ENCODE measurements at regions of chr1 and their contacts with region 1.

Region 1: GRCh38 chr1:228515200-228515834 is 28.1 kb downstream of the RNF187 start:
- DNase-seq: peak; percentile 65
- H3K4me3 Mint-ChIP-seq: no peak overlapping the region
- H3K27ac Mint-ChIP-seq: no peak overlapping the region
- H3K4me1 Mint-ChIP-seq: peaks cover 9% of the 10 kb centered on the region
- H3K27me3 Mint-ChIP-seq: peaks cover 75% of the 10 kb centered on the region
- CTCF ChIP-seq: peak; percentile 97

Region 2: DNA sequence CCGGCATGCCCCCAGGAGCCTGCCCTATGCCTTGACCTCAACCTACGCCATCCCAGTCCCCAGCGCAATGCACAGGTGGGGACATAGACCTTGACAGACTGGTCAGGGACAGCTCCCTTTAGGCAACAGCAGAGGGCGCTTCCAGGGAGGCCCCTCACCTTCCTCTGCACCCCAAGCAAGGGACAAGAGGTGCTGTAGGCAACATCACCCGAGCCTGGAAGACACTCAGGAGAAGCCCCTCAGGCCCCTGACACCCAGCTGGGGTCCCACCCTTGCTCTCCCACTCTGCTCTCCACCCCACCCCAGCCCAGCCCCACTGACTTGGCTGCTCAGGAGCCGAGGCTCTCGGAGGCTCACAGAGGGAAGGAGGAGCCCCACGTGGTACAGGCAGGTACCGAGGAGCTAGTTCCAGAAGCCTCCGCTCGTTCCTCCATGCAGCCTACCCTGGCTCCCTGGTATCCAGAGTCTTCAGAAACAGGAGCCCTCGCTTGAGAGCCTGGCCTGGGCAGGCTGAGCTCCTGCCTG is 510.9 kb before region 1 on chr1:
- CTCF ChIA-PET with region 1: interaction called, 20 read pairs
- POLR2A ChIA-PET with region 1: no interaction called
- intact Hi-C with region 1: loop called (anchors 1 kb)
- DNase-seq: peak; percentile 82
- H3K4me3 Mint-ChIP-seq: no peak overlapping the region
- H3K27ac Mint-ChIP-seq: no peak overlapping the region
- H3K4me1 Mint-ChIP-seq: peaks cover 10% of the 10 kb centered on the region
- H3K27me3 Mint-ChIP-seq: peaks cover 37% of the 10 kb centered on the region
- CTCF ChIP-seq: peak; percentile 88

Region 3: GRCh38 chr1:228212966-228213844 is 302.1 kb before region 1 on chr1:
- CTCF ChIA-PET with region 1: interaction called, 21 read pairs
- POLR2A ChIA-PET with region 1: no interaction called
- intact Hi-C with region 1: loop called (anchors 1 kb)
- DNase-seq: peak; percentile 92
- H3K4me3 Mint-ChIP-seq: peak overlapping the region; percentile 88
- H3K27ac Mint-ChIP-seq: peak overlapping the region; percentile 74
- H3K4me1 Mint-ChIP-seq: peaks cover 8% of the 10 kb centered on the region
- H3K27me3 Mint-ChIP-seq: no peaks in the 10 kb centered on the region
- CTCF ChIP-seq: peak; percentile 69

Region 4: GRCh38 chr1:228265167-228265566 is 250.2 kb before region 1 on chr1:
- CTCF ChIA-PET with region 1: interaction called, 5 read pairs
- POLR2A ChIA-PET with region 1: no interaction called
- intact Hi-C with region 1: loop called (anchors 1 kb)
- DNase-seq: peak; percentile 48
- H3K4me3 Mint-ChIP-seq: no peak overlapping the region
- H3K27ac Mint-ChIP-seq: no peak overlapping the region
- H3K4me1 Mint-ChIP-seq: no peaks in the 10 kb centered on the region
- H3K27me3 Mint-ChIP-seq: no peaks in the 10 kb centered on the region
- CTCF ChIP-seq: peak; percentile 63

Region 5: GRCh38 chr1:228378090-228378872 is 137.0 kb before region 1 on chr1:
- CTCF ChIA-PET with region 1: no interaction called
- POLR2A ChIA-PET with region 1: no interaction called
- intact Hi-C with region 1: loop called (anchors 2 kb)
- DNase-seq: peak; percentile 88
- H3K4me3 Mint-ChIP-seq: peak overlapping the region; percentile 95
- H3K27ac Mint-ChIP-seq: peak overlapping the region; percentile 84
- H3K4me1 Mint-ChIP-seq: peaks cover 21% of the 10 kb centered on the region
- H3K27me3 Mint-ChIP-seq: no peaks in the 10 kb centered on the region
- CTCF ChIP-seq: peak; percentile 91

Region 6: DNA sequence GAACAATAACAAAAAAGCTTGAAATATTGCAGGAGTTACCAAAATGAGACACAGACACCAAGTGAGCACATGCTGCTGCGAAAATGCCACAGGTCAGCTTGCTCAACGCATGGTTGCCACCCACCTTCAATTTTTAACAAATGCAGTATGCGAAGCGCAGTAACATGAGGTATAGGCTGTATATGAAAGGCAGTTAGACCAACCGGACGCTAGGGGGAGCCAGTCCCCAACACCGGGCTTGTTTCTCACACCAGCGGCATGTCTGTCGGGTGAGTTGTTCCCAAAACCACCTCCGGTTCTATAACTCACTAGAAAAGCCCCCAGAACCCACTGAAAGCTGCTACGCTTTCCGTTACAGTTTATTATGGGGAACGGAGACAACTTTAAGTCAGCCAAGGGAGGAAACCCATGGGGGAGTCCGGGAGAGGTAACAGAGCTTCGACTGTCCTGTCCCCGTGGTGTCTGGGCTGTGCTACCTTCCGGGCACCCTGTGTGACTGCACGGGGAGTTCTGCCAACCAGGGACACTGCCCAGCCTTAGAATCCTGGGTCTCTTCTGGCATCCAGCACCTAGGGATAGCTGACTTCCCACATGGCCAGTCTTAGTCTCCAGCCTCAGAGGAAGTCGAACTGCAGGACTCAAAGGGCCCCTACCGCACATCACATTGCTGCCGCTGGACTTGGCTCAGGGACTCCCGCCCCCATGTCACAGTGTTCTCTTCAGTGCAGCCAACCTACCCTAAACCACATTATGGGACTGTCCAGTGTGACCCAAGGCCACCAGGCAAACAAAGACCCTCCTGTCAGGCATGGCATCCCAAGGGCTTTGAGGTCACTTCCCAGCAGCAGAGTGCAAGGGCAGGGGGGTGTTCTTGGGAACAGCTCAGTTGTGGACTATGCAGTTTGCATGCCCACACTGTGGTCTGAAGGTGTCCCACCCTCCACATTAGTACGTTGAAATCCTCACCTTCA is 14.1 kb before region 1 on chr1:
- CTCF ChIA-PET with region 1: interaction called, 86 read pairs
- POLR2A ChIA-PET with region 1: interaction called, 5 read pairs
- intact Hi-C with region 1: no loop called
- DNase-seq: peak; percentile 97
- H3K4me3 Mint-ChIP-seq: peak overlapping the region; percentile 20
- H3K27ac Mint-ChIP-seq: no peak overlapping the region
- H3K4me1 Mint-ChIP-seq: peaks cover 10% of the 10 kb centered on the region
- H3K27me3 Mint-ChIP-seq: no peaks in the 10 kb centered on the region
- CTCF ChIP-seq: peak; percentile 99

Region 7: GRCh38 chr1:228527596-228527995 is 12.3 kb after region 1 on chr1:
- CTCF ChIA-PET with region 1: interaction called, 19 read pairs
- POLR2A ChIA-PET with region 1: no interaction called
- intact Hi-C with region 1: no loop called
- DNase-seq: no peak
- H3K4me3 Mint-ChIP-seq: no peak overlapping the region
- H3K27ac Mint-ChIP-seq: no peak overlapping the region
- H3K4me1 Mint-ChIP-seq: no peaks in the 10 kb centered on the region
- H3K27me3 Mint-ChIP-seq: peaks cover 46% of the 10 kb centered on the region
- CTCF ChIP-seq: no peak

Measured in MCF 10A (cell line).